A673 (cell line): ENCODE measurements at regions of chr9 and their contacts with region 1.

Region 1: GRCh38 chr9:132833550-132834121 is 44.4 kb downstream of the AK8 start:
- DNase-seq: no peak
- H3K4me3 ChIP-seq: no peak overlapping the region
- H3K27ac ChIP-seq: no peak overlapping the region
- H3K4me1 ChIP-seq: no peaks in the 10 kb centered on the region
- H3K27me3 ChIP-seq: peaks cover 18% of the 10 kb centered on the region
- CTCF ChIP-seq: no peak

Region 2: DNA sequence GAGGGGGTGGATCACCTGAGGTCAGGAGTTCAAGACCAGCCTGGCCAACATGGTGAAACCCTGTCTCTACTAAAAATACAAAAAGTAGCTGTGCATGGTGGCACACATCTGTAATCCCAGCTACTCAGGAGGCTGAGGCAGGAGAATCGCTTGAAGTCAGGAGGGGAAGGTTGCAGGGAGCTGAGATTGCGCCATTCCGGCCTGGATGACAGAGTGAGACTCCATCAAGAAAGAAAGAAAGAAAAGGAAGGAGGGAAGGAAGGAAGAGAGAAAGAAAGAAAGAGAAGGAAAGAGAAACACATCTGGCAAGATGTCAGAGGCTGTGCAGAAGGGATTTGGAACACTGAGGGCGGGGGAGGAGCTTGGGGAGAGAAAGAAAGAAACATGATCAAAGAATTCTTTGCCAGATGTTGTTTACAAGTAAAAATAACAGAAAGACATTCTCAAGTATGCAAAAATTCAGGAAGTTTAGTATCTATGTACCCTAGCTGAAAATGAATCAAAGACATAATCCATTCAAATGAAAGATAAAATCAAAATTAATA is 49.3 kb before region 1 on chr9:
- CTCF ChIA-PET with region 1: no interaction called
- POLR2A ChIA-PET with region 1: interaction called, 11 read pairs
- intact Hi-C with region 1: no loop called
- DNase-seq: no peak
- H3K4me3 ChIP-seq: no peak overlapping the region
- H3K27ac ChIP-seq: no peak overlapping the region
- H3K4me1 ChIP-seq: no peaks in the 10 kb centered on the region
- H3K27me3 ChIP-seq: peaks cover 21% of the 10 kb centered on the region
- CTCF ChIP-seq: no peak

Region 3: GRCh38 chr9:133133681-133134418 is 300.2 kb after region 1 on chr9:
- CTCF ChIA-PET with region 1: no interaction called
- POLR2A ChIA-PET with region 1: no interaction called
- intact Hi-C with region 1: no loop called
- DNase-seq: no peak
- H3K4me3 ChIP-seq: no peak overlapping the region
- H3K27ac ChIP-seq: no peak overlapping the region
- H3K4me1 ChIP-seq: peaks cover 5% of the 10 kb centered on the region
- H3K27me3 ChIP-seq: no peaks in the 10 kb centered on the region
- CTCF ChIP-seq: no peak

Region 4: DNA sequence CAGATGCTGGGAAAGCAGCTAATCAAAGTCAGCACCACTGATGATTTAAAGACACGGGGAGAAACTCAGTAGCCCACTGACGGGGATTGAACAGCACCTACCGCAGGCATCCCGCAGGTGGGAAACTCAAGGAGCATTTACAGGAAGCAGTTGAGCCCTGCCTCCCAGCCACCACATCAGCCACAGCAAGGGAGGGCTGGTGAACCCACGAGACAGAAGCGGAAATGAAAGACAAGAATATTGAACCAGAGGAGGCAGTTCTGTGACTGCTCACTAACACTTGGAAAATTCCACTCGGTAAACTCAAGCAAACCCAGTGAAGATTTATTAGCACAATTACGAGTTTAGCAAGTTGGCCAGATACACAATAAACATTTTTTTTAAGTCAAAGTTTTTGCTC is 786.2 kb after region 1 on chr9:
- CTCF ChIA-PET with region 1: no interaction called
- POLR2A ChIA-PET with region 1: no interaction called
- intact Hi-C with region 1: no loop called
- DNase-seq: no peak
- H3K4me3 ChIP-seq: no peak overlapping the region
- H3K27ac ChIP-seq: no peak overlapping the region
- H3K4me1 ChIP-seq: no peaks in the 10 kb centered on the region
- H3K27me3 ChIP-seq: peaks cover 72% of the 10 kb centered on the region
- CTCF ChIP-seq: no peak